ENCODE measurements at regions of chr14 and their contacts with region 1.

Region 1: DNA sequence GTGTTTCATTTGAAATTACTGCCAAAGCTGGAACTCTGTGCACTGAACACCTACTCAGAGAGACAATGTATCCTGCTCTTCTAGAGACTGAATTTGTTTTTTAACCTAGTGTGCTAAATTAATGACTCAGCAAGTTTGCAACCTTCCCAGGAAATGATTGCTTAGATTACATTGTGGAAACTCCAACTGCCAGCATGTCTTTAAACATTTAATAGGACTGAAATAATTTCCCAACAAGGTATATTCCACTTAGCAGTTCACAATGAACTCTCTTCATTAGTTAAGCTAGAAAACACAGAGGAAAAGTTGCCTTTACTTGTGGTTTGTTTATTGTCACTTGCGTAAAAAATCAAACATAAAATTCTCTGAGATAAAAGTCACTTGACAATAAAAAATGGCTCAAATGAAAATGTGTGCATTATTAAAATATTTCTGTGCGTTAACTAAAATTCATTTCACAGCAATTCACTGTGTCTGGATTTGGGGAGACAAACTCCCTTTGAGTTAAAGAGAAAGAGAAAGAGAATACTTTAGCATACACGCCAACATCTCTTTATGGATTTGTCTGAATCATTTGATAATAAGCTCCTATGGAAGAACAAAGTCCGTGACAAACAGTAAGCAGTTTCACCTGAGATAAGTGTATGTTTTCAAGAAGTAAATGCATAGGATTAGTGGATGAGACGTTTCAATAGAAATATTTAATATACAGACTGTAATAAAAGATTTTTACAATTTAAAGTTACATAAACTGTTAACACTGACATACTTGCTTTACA is 284.0 kb downstream of the PRKD1 start:
- DNase-seq: peak; percentile 30
- H3K4me3 Mint-ChIP-seq: no peak overlapping the region
- H3K27ac Mint-ChIP-seq: no peak overlapping the region
- H3K4me1 Mint-ChIP-seq: no peaks in the 10 kb centered on the region
- H3K27me3 Mint-ChIP-seq: no peaks in the 10 kb centered on the region
- CTCF ChIP-seq: no peak

Region 2: GRCh38 chr14:28077021-28077420 is 1566.6 kb before region 1 on chr14:
- CTCF ChIA-PET with region 1: no interaction called
- POLR2A ChIA-PET with region 1: no interaction called
- intact Hi-C with region 1: no loop called
- DNase-seq: no peak
- H3K4me3 Mint-ChIP-seq: no peak overlapping the region
- H3K27ac Mint-ChIP-seq: no peak overlapping the region
- H3K4me1 Mint-ChIP-seq: peaks cover 11% of the 10 kb centered on the region
- H3K27me3 Mint-ChIP-seq: no peaks in the 10 kb centered on the region
- CTCF ChIP-seq: no peak

Region 3: GRCh38 chr14:29222671-29223268 is 420.9 kb before region 1 on chr14:
- CTCF ChIA-PET with region 1: no interaction called
- POLR2A ChIA-PET with region 1: no interaction called
- intact Hi-C with region 1: no loop called
- DNase-seq: peak; percentile 47
- H3K4me3 Mint-ChIP-seq: no peak overlapping the region
- H3K27ac Mint-ChIP-seq: no peak overlapping the region
- H3K4me1 Mint-ChIP-seq: no peaks in the 10 kb centered on the region
- H3K27me3 Mint-ChIP-seq: peaks cover 97% of the 10 kb centered on the region
- CTCF ChIP-seq: peak; percentile 59

Region 4: GRCh38 chr14:29627137-29627536 is 16.5 kb before region 1 on chr14:
- CTCF ChIA-PET with region 1: no interaction called
- POLR2A ChIA-PET with region 1: interaction called, 10 read pairs
- intact Hi-C with region 1: no loop called
- DNase-seq: peak; percentile 13
- H3K4me3 Mint-ChIP-seq: no peak overlapping the region
- H3K27ac Mint-ChIP-seq: peak overlapping the region; percentile 79
- H3K4me1 Mint-ChIP-seq: peaks cover 13% of the 10 kb centered on the region
- H3K27me3 Mint-ChIP-seq: no peaks in the 10 kb centered on the region
- CTCF ChIP-seq: no peak